Activated CD4-positive, alpha-beta T cell treated with anti-CD3 and anti-CD28 coated beads, Interleukin-2, amount 10 ng/mL, durations not matched to agents 7 days and 5 days (primary cell): ENCODE measurements at regions of chr2 and their contacts with region 1.

Region 1: DNA sequence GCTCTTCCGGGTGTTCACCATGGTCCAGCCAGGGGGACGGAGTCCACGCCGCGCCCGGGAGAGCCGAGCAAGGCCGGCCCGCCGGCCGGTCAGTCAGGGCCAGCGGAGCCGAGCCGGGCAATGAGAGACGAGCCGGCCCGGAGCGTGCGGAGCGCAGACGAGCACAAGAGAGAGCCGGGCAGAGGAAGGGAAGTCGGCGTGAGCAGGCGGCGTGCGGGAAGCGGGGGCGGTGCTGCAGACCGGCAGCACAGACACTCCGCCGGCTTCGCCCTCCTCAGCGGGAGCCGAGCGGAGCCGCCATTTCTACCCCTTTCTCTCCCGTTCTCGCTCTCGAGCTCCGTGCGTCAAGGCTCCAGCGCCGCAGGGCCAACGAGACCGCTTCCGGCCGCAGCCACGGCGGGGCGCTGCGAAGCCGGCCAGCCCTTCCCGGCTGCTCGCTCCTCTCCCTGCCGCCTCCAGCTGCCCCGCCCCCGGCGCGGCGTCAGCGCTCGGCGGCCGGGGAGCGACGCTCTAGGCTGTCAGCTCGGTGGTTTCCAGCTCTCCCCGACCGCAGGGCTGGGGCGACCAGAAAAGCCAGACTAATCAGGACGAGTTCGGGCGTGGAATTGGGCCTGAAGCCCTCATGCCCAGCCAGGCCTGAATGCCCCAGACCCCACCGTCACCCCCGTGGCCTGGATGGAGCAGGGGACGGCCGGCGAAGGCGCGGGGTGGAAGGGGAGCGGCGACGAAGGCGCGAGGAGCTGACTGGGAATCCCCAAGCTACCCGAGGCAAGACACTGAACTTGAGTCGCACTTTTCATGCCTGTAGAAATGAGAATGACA is at the start of gene ATAD2B:
- DNase-seq: peak; percentile 91
- H3K4me3 Mint-ChIP-seq: peak within 1 kb of the TSS; percentile 94
- H3K27ac Mint-ChIP-seq: peak within 1 kb of the TSS; percentile 99
- H3K4me1 Mint-ChIP-seq: peaks cover 46% of the 10 kb centered on the region
- H3K27me3 Mint-ChIP-seq: no peaks in the 10 kb centered on the region
- total RNA-seq, gene ATAD2B: 24.7 to 25.6 TPM

Region 2: DNA sequence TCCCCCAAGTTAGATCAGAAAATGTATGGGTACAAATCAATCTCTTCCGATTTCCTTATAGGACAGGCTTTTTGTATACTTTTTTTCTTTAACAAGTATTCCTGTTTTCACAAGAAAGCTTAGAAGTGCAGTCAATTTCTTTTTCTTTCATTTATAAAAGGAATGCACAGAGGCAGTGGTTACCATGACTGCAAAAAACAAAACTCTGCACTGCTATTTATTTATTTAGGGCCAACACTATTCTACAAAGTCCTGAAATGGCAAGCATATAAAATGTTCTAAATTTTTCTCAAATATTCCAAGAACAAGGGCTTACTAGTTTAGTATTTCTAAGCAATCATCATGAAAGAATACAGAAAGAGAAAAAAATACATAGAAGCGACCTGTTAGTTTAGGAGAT is 22.3 kb before region 1 on chr2:
- CTCF ChIA-PET with region 1: interaction called, 10 read pairs
- POLR2A ChIA-PET with region 1: no interaction called
- DNase-seq: no peak
- H3K4me3 Mint-ChIP-seq: no peak overlapping the region
- H3K27ac Mint-ChIP-seq: no peak overlapping the region
- H3K4me1 Mint-ChIP-seq: peaks cover 12% of the 10 kb centered on the region
- H3K27me3 Mint-ChIP-seq: no peaks in the 10 kb centered on the region

Region 3: GRCh38 chr2:23915327-23915726 is 11.6 kb before region 1 on chr2:
- CTCF ChIA-PET with region 1: interaction called, 13 read pairs
- POLR2A ChIA-PET with region 1: interaction called, 13 read pairs
- DNase-seq: no peak
- H3K4me3 Mint-ChIP-seq: no peak overlapping the region
- H3K27ac Mint-ChIP-seq: no peak overlapping the region
- H3K4me1 Mint-ChIP-seq: peaks cover 30% of the 10 kb centered on the region
- H3K27me3 Mint-ChIP-seq: no peaks in the 10 kb centered on the region

Region 4: GRCh38 chr2:23939987-23940717 is 13.2 kb after region 1 on chr2 and contains the start of gene UBXN2A:
- CTCF ChIA-PET with region 1: interaction called, 52 read pairs
- POLR2A ChIA-PET with region 1: interaction called, 8 read pairs
- DNase-seq: peak; percentile 72
- H3K4me3 Mint-ChIP-seq: peak within 1 kb of the TSS; percentile 86
- H3K27ac Mint-ChIP-seq: peak within 1 kb of the TSS; percentile 92
- H3K4me1 Mint-ChIP-seq: peaks cover 24% of the 10 kb centered on the region
- H3K27me3 Mint-ChIP-seq: peaks cover 13% of the 10 kb centered on the region
- total RNA-seq, gene UBXN2A: 9.6 to 11.9 TPM

Region 5: DNA sequence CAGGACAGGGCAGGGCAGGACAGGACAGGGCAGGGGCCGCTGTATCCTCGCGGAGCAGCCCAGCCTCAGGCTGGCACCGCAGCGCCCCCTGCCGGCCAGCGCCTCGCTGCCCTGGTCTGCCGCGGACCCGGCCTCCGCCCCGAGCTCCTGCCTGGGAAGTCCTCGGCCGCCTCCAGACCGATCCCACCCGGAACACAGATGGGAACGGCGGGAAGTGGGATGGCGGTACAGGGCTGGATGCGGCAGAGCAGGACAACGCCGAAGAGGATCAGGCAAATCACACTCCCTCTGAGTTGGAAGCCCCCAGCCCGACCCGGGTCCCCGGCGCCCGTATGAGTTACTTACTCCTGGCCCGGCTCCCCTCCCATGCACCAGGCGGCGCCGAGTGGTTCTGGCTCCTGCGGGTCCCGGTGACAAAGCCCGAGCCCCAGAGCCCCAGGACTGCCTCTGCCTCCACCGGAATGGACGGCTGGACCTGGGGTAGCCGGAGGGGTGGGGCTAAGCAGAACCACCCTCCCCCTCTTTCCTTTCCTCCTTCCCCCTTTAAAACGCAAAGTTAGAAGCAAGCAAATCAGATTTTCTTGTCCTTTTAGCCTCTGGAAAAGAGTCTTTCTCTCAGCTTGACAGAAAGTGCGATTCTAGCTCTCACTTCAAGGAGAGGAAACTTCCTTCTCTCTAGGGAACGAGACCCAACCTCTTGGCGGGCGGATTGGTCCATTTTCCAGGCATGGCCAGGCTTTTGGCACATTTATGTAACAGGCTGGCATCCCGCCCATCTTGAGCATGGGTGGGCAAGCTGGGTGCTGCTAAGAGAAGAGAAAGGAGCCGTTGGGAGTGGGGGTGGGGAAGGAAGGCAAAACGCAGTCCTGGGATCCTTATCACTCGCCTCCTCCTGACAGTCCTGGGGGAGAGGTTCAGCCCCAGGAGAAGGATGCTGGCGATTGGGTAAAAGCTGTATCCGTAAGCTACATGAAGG is 157.7 kb after region 1 on chr2 and contains the start of gene TP53I3:
- CTCF ChIA-PET with region 1: interaction called, 20 read pairs
- POLR2A ChIA-PET with region 1: interaction called, 6 read pairs
- DNase-seq: peak; percentile 77
- H3K4me3 Mint-ChIP-seq: peak within 1 kb of the TSS; percentile 82
- H3K27ac Mint-ChIP-seq: peak within 1 kb of the TSS; percentile 89
- H3K4me1 Mint-ChIP-seq: peaks cover 18% of the 10 kb centered on the region
- H3K27me3 Mint-ChIP-seq: no peaks in the 10 kb centered on the region
- total RNA-seq, gene TP53I3: 2.5 to 2.7 TPM

Region 6: DNA sequence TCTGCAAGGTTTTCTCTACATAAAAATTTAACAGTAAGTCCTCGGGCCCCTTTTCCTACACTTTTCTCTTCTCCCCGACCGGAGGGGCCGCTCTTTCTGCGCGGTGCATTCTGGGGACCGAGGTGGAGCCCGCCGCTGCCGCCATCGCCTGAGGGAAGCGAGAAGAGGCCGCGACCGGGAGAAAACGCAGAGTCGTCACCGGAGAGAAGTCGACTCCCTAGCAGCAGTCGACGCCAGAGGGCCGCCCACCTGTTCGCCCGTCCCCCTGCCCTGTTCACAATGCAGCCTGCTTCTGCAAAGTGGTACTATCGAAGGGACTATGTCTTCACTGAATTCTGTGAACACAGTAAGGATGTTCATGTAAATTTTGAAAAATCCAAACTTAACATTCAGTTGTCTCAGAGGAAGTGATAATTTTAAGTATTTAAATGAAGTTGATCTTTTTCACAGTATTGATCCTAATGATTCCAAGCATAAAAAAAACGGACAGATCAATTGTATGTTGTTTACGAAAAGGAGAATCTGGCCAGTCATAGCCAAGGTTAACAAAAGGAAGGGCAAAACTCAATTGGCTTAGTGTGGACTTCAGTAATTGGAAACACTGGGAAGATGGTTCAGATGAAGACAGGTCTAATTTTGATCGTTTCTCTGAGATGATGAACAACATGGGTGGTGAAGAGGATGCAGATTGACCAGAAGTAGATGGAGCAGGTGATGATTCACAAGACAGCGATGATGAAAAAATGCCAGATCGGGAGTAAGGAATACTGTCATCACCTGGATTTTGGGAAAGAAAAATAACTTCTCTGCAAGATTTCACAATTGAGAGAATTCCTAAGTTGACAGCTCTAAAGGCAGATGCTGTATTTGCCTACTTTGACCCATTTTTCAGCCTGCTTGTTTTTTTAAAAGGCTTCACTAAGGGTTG is 1895.5 kb after region 1 on chr2:
- CTCF ChIA-PET with region 1: no interaction called
- POLR2A ChIA-PET with region 1: no interaction called
- DNase-seq: peak; percentile 44
- H3K4me3 Mint-ChIP-seq: peak overlapping the region; percentile 66
- H3K27ac Mint-ChIP-seq: peak overlapping the region; percentile 78
- H3K4me1 Mint-ChIP-seq: peaks cover 56% of the 10 kb centered on the region
- H3K27me3 Mint-ChIP-seq: no peaks in the 10 kb centered on the region